A549 (cell line): ENCODE measurements at regions of chr17 and their contacts with region 1.

Region 1: DNA sequence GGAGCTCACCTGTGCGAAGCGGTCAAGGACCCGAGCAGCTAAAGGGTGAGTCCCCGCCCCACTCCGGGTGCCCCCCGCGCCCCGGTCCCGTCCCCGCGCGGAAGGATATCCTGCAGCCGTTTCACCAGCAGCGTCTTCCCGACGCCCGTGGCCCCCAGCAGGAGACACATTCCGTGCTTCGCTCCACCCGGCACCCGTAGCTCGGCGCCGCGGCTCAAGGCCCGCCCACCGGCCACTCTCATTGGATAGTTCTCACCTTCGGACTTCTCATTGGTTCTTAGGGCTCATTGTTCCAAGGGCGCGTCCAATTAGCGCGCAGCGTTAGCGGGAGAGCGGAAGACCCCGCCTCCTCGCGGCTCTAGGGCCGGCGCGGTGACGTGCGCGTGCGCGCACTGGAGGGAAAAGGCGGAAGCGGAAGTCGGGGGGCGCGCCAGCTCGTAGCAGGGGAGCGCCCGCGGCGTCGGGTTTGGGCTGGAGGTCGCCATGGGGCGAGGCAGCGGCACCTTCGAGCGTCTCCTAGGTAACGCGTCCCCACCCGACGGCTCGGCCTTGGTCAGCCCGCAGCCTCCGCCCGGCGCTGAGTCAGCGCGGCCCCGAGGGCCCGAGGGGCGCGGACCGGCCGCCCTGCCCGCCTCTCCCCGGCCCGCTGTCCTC is at the starts of genes ARL16 and HGS:
- DNase-seq: peak; percentile 100
- ATAC-seq: peak; percentile 90 to 96
- H3K4me3 ChIP-seq: peak within 1 kb of the TSS; percentile 86
- H3K27ac ChIP-seq: peak within 1 kb of the TSS; percentile 91 to 93
- H3K4me1 ChIP-seq: peaks cover 25% of the 10 kb centered on the region
- CTCF ChIP-seq: no peak
- EP300 ChIP-seq: no peak
- POLR2A ChIP-seq: peak; percentile 62
- RAD21 ChIP-seq: no peak
- polyA plus RNA-seq, gene ARL16: 43.8 and 45.2 TPM in 2 replicates
- polyA plus RNA-seq, gene HGS: 75.7 and 85.9 TPM in 2 replicates

Region 2: GRCh38 chr17:81651692-81652091 is 32.0 kb before region 1 on chr17:
- CTCF ChIA-PET with region 1: no interaction called
- POLR2A ChIA-PET with region 1: no interaction called
- DNase-seq: peak; percentile 85 to 92
- ATAC-seq: peak; percentile 79 to 90
- H3K4me3 ChIP-seq: no peak overlapping the region
- H3K27ac ChIP-seq: peak overlapping the region; percentile 68 to 84
- H3K4me1 ChIP-seq: peaks cover 14% of the 10 kb centered on the region
- CTCF ChIP-seq: no peak
- EP300 ChIP-seq: no peak
- POLR2A ChIP-seq: no peak; the same call in 1 of the 2 replicates
- RAD21 ChIP-seq: no peak

Region 3: DNA sequence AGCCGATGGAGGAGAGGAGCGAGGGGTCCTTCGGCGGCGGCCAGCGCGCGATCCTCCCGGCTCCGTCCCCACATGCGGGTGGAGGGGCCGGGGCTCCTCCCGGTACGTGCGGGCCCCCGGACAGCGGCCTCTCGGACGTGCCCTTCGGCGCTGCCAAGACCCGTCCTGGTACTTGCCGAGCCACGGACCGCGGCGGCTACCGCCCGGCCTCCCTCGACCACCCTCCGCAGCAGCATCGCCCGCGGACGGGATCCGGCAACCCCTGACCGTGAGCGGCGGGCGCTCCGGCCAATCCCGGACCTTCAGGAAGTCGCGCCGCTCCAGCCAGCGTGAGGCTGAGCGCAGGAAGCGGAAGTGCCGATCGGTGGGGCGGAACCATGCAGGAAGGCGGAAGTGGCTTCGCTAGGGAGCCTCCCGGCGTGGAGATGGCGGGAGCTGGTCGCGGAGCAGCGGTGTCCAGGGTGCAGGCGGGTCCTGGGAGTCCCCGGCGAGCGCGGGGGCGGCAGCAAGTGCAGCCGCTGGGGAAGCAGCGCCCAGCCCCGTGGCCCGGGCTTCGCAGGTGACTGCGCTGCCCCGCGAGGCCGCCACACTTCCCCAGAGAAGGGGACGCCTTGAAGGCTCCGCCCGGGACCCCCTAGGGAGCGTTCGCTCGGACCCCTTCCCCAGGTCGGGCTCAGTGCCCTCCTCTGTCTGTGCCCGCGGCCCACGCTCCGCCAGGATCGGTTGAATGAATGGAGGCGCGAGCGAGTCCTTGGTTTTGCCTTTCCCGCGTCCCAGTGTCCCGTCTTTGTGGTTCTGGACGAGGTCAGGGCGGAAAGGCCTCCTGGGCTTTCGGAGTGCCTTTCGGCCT is 17.1 kb before region 1 on chr17 and contains the starts of genes CCDC137 and OXLD1:
- CTCF ChIA-PET with region 1: interaction called, 10 read pairs
- POLR2A ChIA-PET with region 1: interaction called, 23 read pairs
- DNase-seq: peak; percentile 97 to 98
- ATAC-seq: peak; percentile 96 to 99
- H3K4me3 ChIP-seq: peak within 1 kb of the TSS; percentile 99
- H3K27ac ChIP-seq: peak within 1 kb of the TSS; percentile 97 to 99
- H3K4me1 ChIP-seq: peaks cover 22% of the 10 kb centered on the region
- CTCF ChIP-seq: no peak
- EP300 ChIP-seq: no peak
- POLR2A ChIP-seq: peak; percentile 97
- RAD21 ChIP-seq: no peak
- polyA plus RNA-seq, gene CCDC137: 16.6 and 22.6 TPM in 2 replicates
- polyA plus RNA-seq, gene OXLD1: 34.6 and 38.7 TPM in 2 replicates

Region 4: GRCh38 chr17:81702971-81703746 is 19.4 kb after region 1 on chr17 and contains the start of gene MRPL12:
- CTCF ChIA-PET with region 1: interaction called, 17 read pairs
- POLR2A ChIA-PET with region 1: interaction called, 42 read pairs
- DNase-seq: peak; percentile 96
- ATAC-seq: peak; percentile 83 to 90
- H3K4me3 ChIP-seq: peak within 1 kb of the TSS; percentile 90
- H3K27ac ChIP-seq: peak within 1 kb of the TSS; percentile 97 to 98
- H3K4me1 ChIP-seq: peaks cover 22% of the 10 kb centered on the region
- CTCF ChIP-seq: no peak
- EP300 ChIP-seq: no peak; a peak in 1 of 5 replicates
- POLR2A ChIP-seq: peak; percentile 91
- RAD21 ChIP-seq: no peak
- polyA plus RNA-seq, gene MRPL12: 152 and 161 TPM in 2 replicates

Region 5: GRCh38 chr17:82205719-82206508 is 522.2 kb after region 1 on chr17:
- CTCF ChIA-PET with region 1: no interaction called
- POLR2A ChIA-PET with region 1: no interaction called
- DNase-seq: peak; percentile 91 to 94
- ATAC-seq: peak; percentile 91 to 94
- H3K4me3 ChIP-seq: no peak overlapping the region
- H3K27ac ChIP-seq: peak overlapping the region; percentile 84 to 86
- H3K4me1 ChIP-seq: peaks cover 24% of the 10 kb centered on the region
- CTCF ChIP-seq: peak; percentile 78
- EP300 ChIP-seq: no peak
- POLR2A ChIP-seq: peak; percentile 81
- RAD21 ChIP-seq: peak; percentile 72 to 75